SK-N-SH (cell line): ENCODE measurements at regions of chr19 and their contacts with region 1.

Region 1: GRCh38 chr19:28633319-28634018 is 579.5 kb downstream of the UQCRFS1 start:
- DNase-seq: peak; percentile 52
- H3K4me3 ChIP-seq: no peak overlapping the region; a peak in 1 of 4 replicates
- H3K27ac ChIP-seq: no peak overlapping the region
- H3K4me1 ChIP-seq: no peaks in the 10 kb centered on the region
- H3K27me3 ChIP-seq: no peaks in the 10 kb centered on the region
- CTCF ChIP-seq: peak; percentile 88
- EP300 ChIP-seq: no peak
- RAD21 ChIP-seq: peak; percentile 68

Region 2: DNA sequence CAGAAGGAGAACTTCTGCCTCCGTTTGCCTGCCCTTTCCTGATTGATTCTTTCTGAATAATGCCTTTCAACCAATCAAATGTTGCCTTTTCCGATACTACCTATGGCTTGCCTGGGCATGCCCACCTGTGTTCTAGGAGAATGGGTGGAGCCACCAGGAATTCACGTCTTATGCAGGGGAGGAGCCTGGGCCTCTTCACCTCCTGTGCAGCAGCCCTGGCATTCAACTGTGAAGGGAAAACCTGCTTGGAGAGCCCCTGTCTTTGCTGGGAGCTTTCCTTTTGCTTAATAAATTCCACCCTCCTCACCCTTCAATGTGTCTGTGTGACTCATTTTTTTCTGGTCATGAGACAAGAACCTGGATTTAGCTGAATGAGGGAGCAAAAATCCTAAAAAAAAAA is 151.2 kb before region 1 on chr19:
- CTCF ChIA-PET with region 1: no interaction called
- POLR2A ChIA-PET with region 1: no interaction called
- DNase-seq: no peak
- H3K4me3 ChIP-seq: no peak overlapping the region
- H3K27ac ChIP-seq: no peak overlapping the region
- H3K4me1 ChIP-seq: no peaks in the 10 kb centered on the region
- H3K27me3 ChIP-seq: peaks cover 8% of the 10 kb centered on the region; the same call in 1 of the 2 replicates
- CTCF ChIP-seq: no peak
- EP300 ChIP-seq: no peak
- RAD21 ChIP-seq: no peak

Region 3: GRCh38 chr19:28553005-28553404 is 80.5 kb before region 1 on chr19:
- CTCF ChIA-PET with region 1: no interaction called
- POLR2A ChIA-PET with region 1: no interaction called
- DNase-seq: no peak
- H3K4me3 ChIP-seq: no peak overlapping the region
- H3K27ac ChIP-seq: no peak overlapping the region
- H3K4me1 ChIP-seq: no peaks in the 10 kb centered on the region
- H3K27me3 ChIP-seq: no peaks in the 10 kb centered on the region; the same call in 1 of the 2 replicates
- CTCF ChIP-seq: no peak
- EP300 ChIP-seq: no peak
- RAD21 ChIP-seq: no peak

Region 4: DNA sequence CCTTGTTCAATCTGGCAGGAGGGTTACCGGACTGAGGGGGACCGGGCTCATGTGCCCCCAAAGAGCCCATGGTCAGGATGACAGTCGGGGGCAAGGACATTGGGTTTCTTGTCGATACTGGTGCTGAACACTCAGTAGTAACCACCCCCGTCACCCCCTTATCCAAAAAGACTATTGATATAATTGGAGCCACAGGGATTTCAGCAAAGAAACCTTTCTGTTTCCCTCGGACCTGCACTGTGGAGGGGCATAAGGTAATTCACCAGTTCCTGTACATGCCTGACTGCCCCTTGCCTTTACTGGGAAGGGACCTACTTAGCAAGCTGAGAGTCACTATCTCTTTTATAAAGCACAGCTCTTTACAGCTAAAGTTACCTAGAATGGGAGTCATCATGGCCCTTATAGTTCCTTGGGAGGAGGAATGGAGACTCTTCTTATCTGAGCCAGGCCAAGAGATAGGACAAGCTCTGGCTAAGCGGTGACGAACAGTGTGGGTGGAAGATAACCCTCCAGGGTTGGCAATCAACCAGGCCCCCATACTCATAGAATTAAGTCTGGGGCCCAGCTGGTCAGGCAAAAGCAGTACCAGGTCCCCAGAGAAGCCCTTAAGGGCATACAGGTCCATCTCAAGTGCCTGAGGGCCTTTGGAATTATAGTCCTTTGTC is 24.2 kb before region 1 on chr19:
- CTCF ChIA-PET with region 1: interaction called, 10 read pairs
- POLR2A ChIA-PET with region 1: no interaction called
- DNase-seq: no peak
- H3K4me3 ChIP-seq: no peak overlapping the region
- H3K27ac ChIP-seq: no peak overlapping the region
- H3K4me1 ChIP-seq: no peaks in the 10 kb centered on the region
- H3K27me3 ChIP-seq: no peaks in the 10 kb centered on the region
- CTCF ChIP-seq: no peak
- EP300 ChIP-seq: no peak
- RAD21 ChIP-seq: no peak

Region 5: DNA sequence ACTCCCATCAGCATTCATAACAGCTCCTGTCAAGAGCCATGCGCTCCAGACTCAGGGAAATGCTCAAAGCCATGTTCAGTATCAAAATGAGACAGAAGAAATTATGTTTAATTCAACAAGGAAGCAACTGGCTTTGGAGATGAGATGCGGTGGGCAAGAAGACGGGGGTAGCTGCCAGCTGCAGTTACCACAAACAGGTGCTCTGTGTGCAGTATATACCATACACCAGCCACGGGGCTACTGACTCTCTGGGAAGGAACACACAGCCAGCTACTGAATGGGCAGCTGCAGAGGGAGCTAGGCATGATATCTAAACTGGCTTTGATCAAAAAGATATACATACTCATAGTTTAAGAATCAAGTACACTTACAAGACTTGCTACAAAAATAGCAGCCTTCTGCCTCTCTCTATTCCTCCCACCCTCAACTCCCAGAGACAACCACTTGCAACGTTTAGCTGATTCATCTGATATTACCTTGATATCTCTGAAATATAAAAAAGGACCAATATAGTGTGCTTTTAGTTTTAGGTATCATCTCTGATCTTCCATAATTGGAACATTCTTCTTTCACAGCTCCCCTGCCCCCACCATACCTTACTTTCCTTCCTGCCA is 13.5 kb before region 1 on chr19:
- CTCF ChIA-PET with region 1: interaction called, 25 read pairs
- POLR2A ChIA-PET with region 1: no interaction called
- DNase-seq: no peak
- H3K4me3 ChIP-seq: no peak overlapping the region
- H3K27ac ChIP-seq: no peak overlapping the region
- H3K4me1 ChIP-seq: no peaks in the 10 kb centered on the region
- H3K27me3 ChIP-seq: no peaks in the 10 kb centered on the region
- CTCF ChIP-seq: no peak
- EP300 ChIP-seq: no peak
- RAD21 ChIP-seq: no peak